Calu3 (cell line): ENCODE measurements at regions of chr1 and their contacts with region 1.

Region 1: GRCh38 chr1:222455188-222455879 is 92.6 kb downstream of the HHIPL2 start:
- DNase-seq: peak; percentile 89
- H3K4me3 Mint-ChIP-seq: no peak overlapping the region
- H3K27ac Mint-ChIP-seq: no peak overlapping the region
- H3K4me1 Mint-ChIP-seq: peaks cover 12% of the 10 kb centered on the region
- H3K27me3 Mint-ChIP-seq: peaks cover 29% of the 10 kb centered on the region
- CTCF ChIP-seq: peak; percentile 92

Region 2: DNA sequence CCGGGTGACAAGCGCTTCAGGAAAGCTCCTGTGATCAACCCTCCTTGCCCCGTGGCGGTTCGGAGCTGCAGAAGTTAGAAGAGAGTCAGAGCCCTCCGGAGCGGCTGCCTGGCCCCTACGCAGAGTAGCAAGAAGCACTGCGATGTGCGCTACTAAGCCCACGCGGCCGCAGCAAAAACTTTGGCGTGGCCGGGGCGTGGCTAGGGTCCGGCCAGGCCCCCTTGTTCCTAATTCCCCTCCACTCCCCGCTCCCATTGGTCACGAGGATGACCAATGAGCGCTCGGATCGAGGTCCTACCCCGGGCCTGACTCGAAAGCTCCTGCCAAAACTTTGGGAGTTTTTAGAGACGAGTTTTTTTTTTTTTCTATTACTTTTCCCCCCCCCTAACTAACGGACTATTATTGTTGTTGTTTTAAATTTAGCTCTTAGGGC is 1576.2 kb before region 1 on chr1 and contains the start of gene HLX:
- CTCF ChIA-PET with region 1: no interaction called
- intact Hi-C with region 1: loop called (anchors 10 kb)
- DNase-seq: peak; percentile 64
- H3K4me3 Mint-ChIP-seq: peak within 1 kb of the TSS; percentile 83
- H3K27ac Mint-ChIP-seq: no peak within 1 kb of the TSS
- H3K4me1 Mint-ChIP-seq: no peaks in the 10 kb centered on the region
- H3K27me3 Mint-ChIP-seq: peaks cover 38% of the 10 kb centered on the region
- CTCF ChIP-seq: no peak
- total RNA-seq, gene HLX: 0.09 and 0.32 TPM in 2 replicates

Region 3: GRCh38 chr1:221708987-221709386 is 746.3 kb before region 1 on chr1:
- CTCF ChIA-PET with region 1: interaction called, 13 read pairs
- intact Hi-C with region 1: no loop called
- DNase-seq: peak; percentile 72
- H3K4me3 Mint-ChIP-seq: peak overlapping the region; percentile 31
- H3K27ac Mint-ChIP-seq: peak overlapping the region; percentile 93
- H3K4me1 Mint-ChIP-seq: peaks cover 57% of the 10 kb centered on the region
- H3K27me3 Mint-ChIP-seq: no peaks in the 10 kb centered on the region
- CTCF ChIP-seq: no peak

Region 4: GRCh38 chr1:222105393-222105737 is 350.0 kb before region 1 on chr1:
- CTCF ChIA-PET with region 1: no interaction called
- intact Hi-C with region 1: loop called (anchors 5 kb)
- DNase-seq: peak; percentile 74
- H3K4me3 Mint-ChIP-seq: no peak overlapping the region
- H3K27ac Mint-ChIP-seq: peak overlapping the region; percentile 25
- H3K4me1 Mint-ChIP-seq: peaks cover 39% of the 10 kb centered on the region
- H3K27me3 Mint-ChIP-seq: no peaks in the 10 kb centered on the region
- CTCF ChIP-seq: no peak

Region 5: GRCh38 chr1:222216255-222216754 is 239.0 kb before region 1 on chr1:
- CTCF ChIA-PET with region 1: no interaction called
- intact Hi-C with region 1: loop called (anchors 1 kb)
- DNase-seq: no peak
- H3K4me3 Mint-ChIP-seq: no peak overlapping the region
- H3K27ac Mint-ChIP-seq: no peak overlapping the region
- H3K4me1 Mint-ChIP-seq: no peaks in the 10 kb centered on the region
- H3K27me3 Mint-ChIP-seq: no peaks in the 10 kb centered on the region
- CTCF ChIP-seq: no peak